Aorta (tissue), 5 donors: ENCODE measurements at regions of chr15 and their contacts with region 1.

Region 1: GRCh38 chr15:58066042-58066867 is 744 bp upstream of the ALDH1A2 start:
- DNase-seq: peak; percentile 75 to 88
- ATAC-seq: peak; percentile 92
- H3K4me3 ChIP-seq: peak overlapping the region in 1 of 2 donors; percentile 23
- H3K27ac ChIP-seq: no peak overlapping the region
- H3K4me1 ChIP-seq: no peaks in the 10 kb centered on the region
- H3K27me3 ChIP-seq: no peaks in the 10 kb centered on the region

Region 2: DNA sequence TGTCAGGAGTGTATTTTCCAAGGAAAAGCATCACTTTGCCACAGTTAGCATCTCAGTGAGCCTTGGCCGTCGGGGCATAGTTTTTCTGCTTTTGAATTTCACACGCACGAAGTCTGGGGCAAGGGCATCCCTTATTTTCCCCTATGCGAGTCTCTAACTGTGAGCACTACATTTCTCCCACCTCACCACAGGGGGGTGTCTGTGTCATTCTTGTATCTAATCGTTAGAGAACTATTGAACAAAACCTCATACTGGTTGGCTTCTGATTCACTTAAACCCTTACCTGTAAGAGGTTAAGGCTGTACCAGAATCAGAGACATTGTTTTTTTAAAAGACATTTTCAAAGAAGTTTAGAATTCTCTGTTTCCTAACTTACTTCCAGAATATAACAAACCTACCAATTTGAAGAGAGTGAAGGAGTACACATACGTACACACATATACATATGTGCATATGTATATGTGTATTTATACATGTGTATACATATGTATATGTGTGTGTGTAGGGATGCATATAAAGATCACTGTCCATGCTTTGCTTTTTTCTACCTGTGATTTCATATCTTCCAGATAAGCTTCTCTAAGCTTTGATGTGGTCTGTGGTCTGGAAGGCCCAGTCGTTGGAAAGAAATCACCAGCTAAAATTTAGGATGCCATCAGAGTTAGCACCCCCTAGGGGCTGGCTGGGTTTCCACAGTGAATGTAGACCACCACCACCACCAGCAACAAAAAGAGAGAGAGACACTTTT is 425.1 kb before region 1 on chr15:
- intact Hi-C with region 1: loop called in 1 of 2 experiments (anchors 10 kb)
- DNase-seq: no peak
- ATAC-seq: no peak
- H3K4me3 ChIP-seq: no peak overlapping the region
- H3K27ac ChIP-seq: no peak overlapping the region
- H3K4me1 ChIP-seq: no peaks in the 10 kb centered on the region
- H3K27me3 ChIP-seq: no peaks in the 10 kb centered on the region

Region 3: DNA sequence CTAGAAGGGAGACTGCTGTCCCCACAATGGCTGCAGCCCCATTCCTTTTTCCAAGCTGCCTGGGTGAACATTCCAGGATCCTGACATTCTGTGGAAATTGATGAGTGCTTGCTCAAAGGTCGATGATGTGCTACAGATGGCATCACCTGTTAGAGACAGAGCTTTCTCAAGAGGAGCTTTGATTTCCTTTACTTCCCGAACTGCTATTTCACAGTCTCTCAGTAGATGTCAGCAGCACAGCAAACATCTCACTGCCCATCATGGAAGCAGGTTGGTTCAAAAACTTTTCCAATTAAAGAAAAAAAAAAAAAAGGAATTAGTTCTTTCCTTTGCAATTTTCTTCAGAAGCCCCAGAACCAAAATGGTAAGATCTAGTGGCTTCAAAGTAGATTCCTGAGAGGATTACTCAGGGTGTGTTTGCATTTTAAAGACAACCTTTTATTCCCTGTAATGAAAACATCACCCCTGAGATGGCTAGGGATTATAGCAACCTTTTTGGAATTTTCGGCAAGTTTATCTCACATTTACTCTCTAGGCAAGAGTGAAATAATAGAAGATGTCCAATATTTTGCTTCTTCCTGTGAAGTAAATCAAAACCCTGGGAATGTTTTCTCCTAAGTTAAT is 315.0 kb before region 1 on chr15:
- intact Hi-C with region 1: loop called (anchors 10 kb)
- DNase-seq: no peak
- ATAC-seq: no peak
- H3K4me3 ChIP-seq: no peak overlapping the region
- H3K27ac ChIP-seq: no peak overlapping the region
- H3K4me1 ChIP-seq: no peaks in the 10 kb centered on the region
- H3K27me3 ChIP-seq: no peaks in the 10 kb centered on the region

Region 4: GRCh38 chr15:57861036-57861638 is 205.1 kb before region 1 on chr15:
- intact Hi-C with region 1: loop called (anchors 5 to 10 kb)
- DNase-seq: no peak
- ATAC-seq: peak; percentile 71
- H3K4me3 ChIP-seq: no peak overlapping the region
- H3K27ac ChIP-seq: no peak overlapping the region
- H3K4me1 ChIP-seq: no peaks in the 10 kb centered on the region
- H3K27me3 ChIP-seq: no peaks in the 10 kb centered on the region

Region 5: GRCh38 chr15:57866149-57866736 is 200.0 kb before region 1 on chr15:
- intact Hi-C with region 1: loop called (anchors 5 to 10 kb)
- DNase-seq: peak; percentile 53 to 81
- ATAC-seq: peak; percentile 62
- H3K4me3 ChIP-seq: no peak overlapping the region
- H3K27ac ChIP-seq: no peak overlapping the region
- H3K4me1 ChIP-seq: no peaks in the 10 kb centered on the region
- H3K27me3 ChIP-seq: no peaks in the 10 kb centered on the region